ENCODE measurements at regions of chr1 and their contacts with region 1.

Region 1: GRCh38 chr1:52139817-52140540 is 1.9 kb upstream of the ZFYVE9 start:
- DNase-seq: no peak
- ATAC-seq: no peak
- H3K4me3 ChIP-seq: no peak overlapping the region
- H3K27ac ChIP-seq: no peak overlapping the region
- H3K4me1 ChIP-seq: peaks cover 0 to 18% (median 12%) of the 10 kb centered on the region in 3 donors
- H3K27me3 ChIP-seq: no peaks in the 10 kb centered on the region
- CTCF ChIP-seq: no peak

Region 2: DNA sequence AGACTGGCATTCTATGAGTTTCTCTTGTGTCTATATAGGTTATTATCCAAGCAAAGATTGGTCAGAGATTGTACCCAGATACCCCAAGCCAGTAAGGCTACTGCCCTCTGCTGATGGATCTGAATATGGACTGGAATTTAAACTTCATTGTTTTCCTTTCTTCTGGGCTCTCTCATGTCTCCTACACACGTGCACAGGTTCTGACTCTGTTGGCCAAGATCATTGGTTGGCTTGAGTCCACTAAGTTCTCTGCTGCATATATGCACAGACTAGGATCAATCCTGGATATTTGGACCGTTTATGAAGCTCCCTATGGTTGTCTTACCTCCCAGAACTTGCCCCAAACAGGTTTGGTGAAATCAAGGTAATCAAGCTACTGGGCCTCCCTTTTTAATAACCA is 156.4 kb after region 1 on chr1:
- intact Hi-C with region 1: loop called in 1 of 3 experiments (anchors 10 kb)
- DNase-seq: no peak
- ATAC-seq: peak; percentile 79 to 97 (median 92)
- H3K4me3 ChIP-seq: no peak overlapping the region
- H3K27ac ChIP-seq: no peak overlapping the region
- H3K4me1 ChIP-seq: no peaks in the 10 kb centered on the region
- H3K27me3 ChIP-seq: no peaks in the 10 kb centered on the region
- CTCF ChIP-seq: peak; percentile 22 to 53 (median 43)

Region 3: GRCh38 chr1:52306227-52307006 is 166.4 kb after region 1 on chr1:
- intact Hi-C with region 1: loop called in 1 of 3 experiments (anchors 10 kb)
- DNase-seq: peak in 3 of 6 donors; percentile 45 to 76 (median 70)
- ATAC-seq: no peak
- H3K4me3 ChIP-seq: no peak overlapping the region
- H3K27ac ChIP-seq: no peak overlapping the region
- H3K4me1 ChIP-seq: no peaks in the 10 kb centered on the region
- H3K27me3 ChIP-seq: no peaks in the 10 kb centered on the region
- CTCF ChIP-seq: no peak

Measured in pancreas (tissue), 10 donors.